Activated CD4-positive, alpha-beta T cell treated with anti-CD3 and anti-CD28 coated beads for 36 hours (primary cell): ENCODE measurements at regions of chr3 and their contacts with region 1.

Region 1: DNA sequence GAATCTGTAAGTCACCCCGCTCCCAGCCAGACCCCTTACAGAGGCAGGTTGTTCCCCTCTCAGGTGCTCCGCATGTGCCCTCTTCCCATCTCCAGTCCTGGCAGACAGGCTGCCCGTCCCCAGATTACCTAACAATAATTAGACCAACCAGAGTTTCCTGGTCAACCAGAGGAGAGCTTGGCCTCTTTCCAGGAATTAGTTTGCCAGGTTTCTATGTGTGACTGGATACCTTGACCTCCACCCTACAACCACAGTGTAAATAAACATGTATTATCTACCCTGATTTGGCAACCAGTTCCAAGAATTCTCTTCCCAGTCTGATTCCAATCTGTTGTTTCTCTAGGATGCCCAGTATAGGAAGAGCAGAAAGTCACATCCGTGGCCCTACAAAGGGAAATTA is 178.0 kb upstream of the UMPS start:
- DNase-seq: no peak
- ATAC-seq: no peak
- H3K4me3 Mint-ChIP-seq: no peak overlapping the region
- H3K27ac Mint-ChIP-seq: no peak overlapping the region
- H3K4me1 Mint-ChIP-seq: no peaks in the 10 kb centered on the region
- H3K27me3 Mint-ChIP-seq: peaks cover 31% of the 10 kb centered on the region

Region 2: DNA sequence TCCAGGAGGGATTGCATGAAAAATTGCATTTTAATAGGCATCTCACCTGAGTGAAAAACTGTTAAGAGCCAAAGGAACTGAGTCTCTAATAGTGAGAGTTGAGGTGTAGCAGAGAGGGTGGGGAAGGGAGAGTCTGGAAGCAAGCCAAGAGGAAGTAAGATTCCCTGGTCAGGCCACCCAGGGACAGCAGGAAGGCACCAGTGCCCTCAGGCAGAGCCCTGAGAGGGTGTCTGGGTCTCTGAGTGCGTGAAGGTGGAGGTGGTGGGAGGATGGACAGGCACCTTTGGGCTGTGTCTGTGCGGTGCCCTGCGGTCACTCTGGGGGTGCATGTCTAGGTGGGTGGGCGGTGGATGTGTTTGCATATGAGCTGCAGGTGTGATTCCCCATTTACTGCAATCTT is 259.9 kb before region 1 on chr3:
- CTCF ChIA-PET with region 1: no interaction called
- POLR2A ChIA-PET with region 1: no interaction called
- intact Hi-C with region 1: no loop called
- DNase-seq: no peak
- ATAC-seq: no peak
- H3K4me3 Mint-ChIP-seq: no peak overlapping the region
- H3K27ac Mint-ChIP-seq: no peak overlapping the region
- H3K4me1 Mint-ChIP-seq: no peaks in the 10 kb centered on the region
- H3K27me3 Mint-ChIP-seq: peaks cover 14% of the 10 kb centered on the region

Region 3: GRCh38 chr3:124351430-124352148 is 200.7 kb before region 1 on chr3:
- CTCF ChIA-PET with region 1: interaction called, 4 read pairs
- POLR2A ChIA-PET with region 1: no interaction called
- intact Hi-C with region 1: loop called (anchors 1 to 10 kb)
- DNase-seq: no peak
- ATAC-seq: no peak
- H3K4me3 Mint-ChIP-seq: no peak overlapping the region
- H3K27ac Mint-ChIP-seq: no peak overlapping the region
- H3K4me1 Mint-ChIP-seq: no peaks in the 10 kb centered on the region
- H3K27me3 Mint-ChIP-seq: peaks cover 12% of the 10 kb centered on the region

Region 4: GRCh38 chr3:124492811-124493210 is 59.4 kb before region 1 on chr3:
- CTCF ChIA-PET with region 1: no interaction called
- POLR2A ChIA-PET with region 1: no interaction called
- intact Hi-C with region 1: loop called (anchors 1 kb)
- DNase-seq: peak; percentile 44
- ATAC-seq: peak; percentile 55
- H3K4me3 Mint-ChIP-seq: no peak overlapping the region
- H3K27ac Mint-ChIP-seq: no peak overlapping the region
- H3K4me1 Mint-ChIP-seq: no peaks in the 10 kb centered on the region
- H3K27me3 Mint-ChIP-seq: peaks cover 6% of the 10 kb centered on the region

Region 5: DNA sequence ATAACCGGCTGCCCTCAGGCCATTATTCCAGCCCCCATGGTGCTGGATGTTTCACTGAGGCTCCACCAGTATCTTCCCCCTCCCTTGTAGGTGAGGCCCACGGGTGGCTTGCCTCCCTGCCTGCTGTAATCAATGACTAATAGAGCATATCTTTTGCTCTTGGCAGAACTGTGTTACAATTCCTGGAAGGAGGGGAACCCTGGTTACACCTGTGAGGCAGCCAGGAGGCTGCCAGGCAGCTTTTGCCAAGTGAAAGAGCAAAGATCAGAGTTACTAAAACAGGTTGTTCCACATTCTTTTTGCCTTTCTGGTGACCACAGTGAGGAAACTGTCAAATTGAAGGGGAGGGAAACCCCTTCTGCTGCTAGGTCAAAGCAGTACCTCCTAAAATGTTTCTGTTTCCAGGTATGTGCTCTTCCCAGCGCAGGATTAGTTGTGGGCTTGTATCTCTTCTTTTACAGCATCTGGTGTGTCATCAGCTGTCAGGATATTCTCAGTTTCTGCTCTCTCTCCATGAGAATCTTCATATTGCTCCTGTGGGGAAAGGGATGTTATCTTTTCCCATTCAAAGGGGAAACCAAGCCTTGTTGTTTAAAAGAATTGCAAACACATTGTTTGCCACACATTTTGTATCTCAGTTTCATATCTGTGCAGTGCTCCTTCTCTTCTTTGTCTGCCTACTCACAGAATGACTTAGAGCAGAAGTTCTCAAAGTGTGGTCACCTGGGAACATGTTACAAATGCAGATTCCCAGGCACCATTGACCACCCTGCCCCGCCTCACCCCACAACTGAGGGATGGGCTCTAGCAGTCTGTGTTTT is 40.6 kb after region 1 on chr3:
- CTCF ChIA-PET with region 1: no interaction called
- POLR2A ChIA-PET with region 1: no interaction called
- intact Hi-C with region 1: no loop called
- DNase-seq: peak; percentile 50
- ATAC-seq: peak; percentile 78
- H3K4me3 Mint-ChIP-seq: no peak overlapping the region
- H3K27ac Mint-ChIP-seq: peak overlapping the region; percentile 47
- H3K4me1 Mint-ChIP-seq: peaks cover 33% of the 10 kb centered on the region
- H3K27me3 Mint-ChIP-seq: peaks cover 14% of the 10 kb centered on the region